ENCODE measurements at regions of chr2 and their contacts with region 1.

Region 1: GRCh38 chr2:121071034-121071504 is 213.9 kb downstream of the TFCP2L1 start:
- DNase-seq: peak; percentile 61 to 83 (median 78)
- ATAC-seq: peak; percentile 56
- H3K4me3 ChIP-seq: no peak overlapping the region
- H3K4me1 ChIP-seq: no peaks in the 10 kb centered on the region
- CTCF ChIP-seq: peak; percentile 68

Region 2: DNA sequence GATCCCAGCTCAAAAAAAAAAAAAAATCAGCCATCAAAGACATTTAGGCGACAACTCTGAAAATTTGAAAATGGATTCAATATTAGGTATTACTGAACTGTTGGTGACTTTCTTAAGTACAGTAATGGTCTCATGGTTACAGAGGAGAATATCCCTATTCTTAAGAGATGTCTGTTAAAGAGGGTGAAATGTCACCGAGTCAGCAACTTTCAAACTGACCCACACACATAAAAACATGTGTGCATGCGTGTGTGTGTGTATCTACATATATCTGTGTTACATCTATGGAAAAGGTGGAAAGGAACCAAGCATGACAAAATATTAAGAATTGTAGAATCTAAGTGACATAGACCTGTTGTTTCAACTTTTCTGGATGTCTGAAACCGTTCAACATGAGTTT is 377.0 kb before region 1 on chr2:
- intact Hi-C with region 1: loop called (anchors 2 to 5 kb)
- DNase-seq: no peak
- ATAC-seq: no peak
- H3K4me3 ChIP-seq: no peak overlapping the region
- H3K4me1 ChIP-seq: no peaks in the 10 kb centered on the region
- CTCF ChIP-seq: no peak

Region 3: DNA sequence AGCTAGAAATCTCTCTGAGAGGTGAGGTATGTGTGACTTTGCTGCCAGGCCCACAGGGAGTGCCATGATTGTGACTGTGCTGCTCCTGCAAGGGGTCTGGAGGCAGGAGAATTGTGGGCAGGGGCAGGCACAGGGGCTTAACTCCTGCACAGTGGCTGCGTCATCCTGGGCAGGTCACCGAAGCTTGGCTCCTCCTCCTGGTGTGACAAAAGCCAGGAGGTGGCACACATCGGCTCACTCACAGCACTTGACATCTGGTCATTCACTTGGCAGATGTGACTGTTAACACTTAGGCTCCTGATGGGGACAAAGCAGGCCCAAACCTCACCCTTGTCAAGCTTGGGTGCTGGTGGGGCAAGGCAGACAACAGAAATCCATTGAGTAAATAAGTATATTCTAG is 371.8 kb before region 1 on chr2:
- intact Hi-C with region 1: loop called (anchors 2 to 5 kb)
- DNase-seq: no peak
- ATAC-seq: no peak
- H3K4me3 ChIP-seq: no peak overlapping the region
- H3K4me1 ChIP-seq: no peaks in the 10 kb centered on the region
- CTCF ChIP-seq: no peak

Region 4: GRCh38 chr2:120934574-120935340 is 136.3 kb before region 1 on chr2:
- intact Hi-C with region 1: no loop called
- DNase-seq: peak in 2 of 3 donors; percentile 42 to 69
- ATAC-seq: peak; percentile 83
- H3K4me3 ChIP-seq: no peak overlapping the region
- H3K4me1 ChIP-seq: peaks cover 30% of the 10 kb centered on the region
- CTCF ChIP-seq: no peak